ENCODE measurements at regions of chr20 and their contacts with region 1.

Region 1: GRCh38 chr20:39112178-39112743 is 150.1 kb downstream of the DHX35 start:
- DNase-seq: peak; percentile 4
- H3K4me3 ChIP-seq: no peak overlapping the region
- H3K27ac ChIP-seq: no peak overlapping the region
- H3K4me1 ChIP-seq: no peaks in the 10 kb centered on the region
- H3K27me3 ChIP-seq: no peaks in the 10 kb centered on the region
- CTCF ChIP-seq: peak; percentile 52 to 70

Region 2: GRCh38 chr20:39124064-39124463 is 11.8 kb after region 1 on chr20:
- CTCF ChIA-PET with region 1: no interaction called
- dilution Hi-C with region 1: no loop called
- in situ Hi-C with region 1: no loop called
- intact Hi-C with region 1: no loop called
- DNase-seq: peak; percentile 39
- H3K4me3 ChIP-seq: no peak overlapping the region
- H3K27ac ChIP-seq: no peak overlapping the region
- H3K4me1 ChIP-seq: no peaks in the 10 kb centered on the region
- H3K27me3 ChIP-seq: no peaks in the 10 kb centered on the region
- CTCF ChIP-seq: no peak

Region 3: GRCh38 chr20:39429716-39430115 is 317.5 kb after region 1 on chr20:
- CTCF ChIA-PET with region 1: no interaction called
- dilution Hi-C with region 1: no loop called
- in situ Hi-C with region 1: no loop called
- intact Hi-C with region 1: loop called (anchors 1 kb)
- DNase-seq: no peak
- H3K4me3 ChIP-seq: no peak overlapping the region
- H3K27ac ChIP-seq: no peak overlapping the region
- H3K4me1 ChIP-seq: no peaks in the 10 kb centered on the region
- H3K27me3 ChIP-seq: no peaks in the 10 kb centered on the region
- CTCF ChIP-seq: peak in 1 of 2 donors; percentile 30

Region 4: GRCh38 chr20:40251284-40251932 is 1139.1 kb after region 1 on chr20:
- CTCF ChIA-PET with region 1: no interaction called
- dilution Hi-C with region 1: no loop called
- in situ Hi-C with region 1: no loop called
- intact Hi-C with region 1: loop called (anchors 5 kb)
- DNase-seq: peak; percentile 48
- H3K4me3 ChIP-seq: no peak overlapping the region
- H3K27ac ChIP-seq: no peak overlapping the region
- H3K4me1 ChIP-seq: no peaks in the 10 kb centered on the region
- H3K27me3 ChIP-seq: no peaks in the 10 kb centered on the region
- CTCF ChIP-seq: peak; percentile 70 to 90